H1 (cell line): ENCODE measurements at regions of chr10 and their contacts with region 1.

Region 1: DNA sequence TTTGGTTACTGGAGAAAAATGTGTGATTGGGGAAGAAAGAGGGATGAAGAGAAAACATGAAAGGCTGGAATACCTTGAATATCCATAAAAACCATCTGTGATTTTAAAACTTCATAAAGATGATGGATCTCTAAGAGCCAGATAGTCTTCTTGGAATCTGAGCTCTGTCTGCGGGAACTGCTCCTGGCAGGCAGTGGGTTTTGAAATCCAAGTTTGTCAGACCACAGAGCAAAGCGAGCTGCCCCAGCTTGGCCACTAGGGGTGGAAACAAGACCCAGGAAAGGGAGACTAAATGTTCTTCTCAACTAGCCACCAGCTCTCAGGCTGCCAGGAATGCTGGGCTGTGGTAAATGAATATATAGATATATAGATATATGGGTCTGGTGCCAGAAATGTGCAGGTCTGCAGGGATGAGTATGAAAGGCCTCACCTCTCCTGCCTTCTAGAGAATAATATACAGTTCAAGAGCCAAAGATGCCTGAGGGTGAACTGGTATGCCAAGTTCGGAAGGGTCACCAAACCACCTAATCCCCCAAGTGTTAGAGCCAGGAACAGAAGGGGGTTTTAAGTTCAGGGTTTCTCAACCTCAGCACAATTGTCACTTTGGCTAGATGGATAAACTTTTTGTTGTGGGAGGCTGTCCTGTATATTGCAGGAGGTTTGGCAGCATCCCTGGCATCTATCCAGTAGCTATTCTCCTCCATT is 208.8 kb downstream of the KCNMA1 start:
- DNase-seq: peak in 1 of 2 experiments; percentile 60
- H3K4me3 ChIP-seq: no peak overlapping the region
- H3K27ac ChIP-seq: no peak overlapping the region
- H3K4me1 ChIP-seq: peaks cover 0 to 15% (median 5%) of the 10 kb centered on the region in 4 experiments; a peak in 3 of 7 replicates
- H3K27me3 ChIP-seq: no peaks in the 10 kb centered on the region; a peak in 1 of 7 replicates
- CTCF ChIP-seq: peak; percentile 65 to 84 (median 76)
- EP300 ChIP-seq: no peak
- POLR2A ChIP-seq: no peak
- RAD21 ChIP-seq: peak; percentile 47 to 71

Region 2: DNA sequence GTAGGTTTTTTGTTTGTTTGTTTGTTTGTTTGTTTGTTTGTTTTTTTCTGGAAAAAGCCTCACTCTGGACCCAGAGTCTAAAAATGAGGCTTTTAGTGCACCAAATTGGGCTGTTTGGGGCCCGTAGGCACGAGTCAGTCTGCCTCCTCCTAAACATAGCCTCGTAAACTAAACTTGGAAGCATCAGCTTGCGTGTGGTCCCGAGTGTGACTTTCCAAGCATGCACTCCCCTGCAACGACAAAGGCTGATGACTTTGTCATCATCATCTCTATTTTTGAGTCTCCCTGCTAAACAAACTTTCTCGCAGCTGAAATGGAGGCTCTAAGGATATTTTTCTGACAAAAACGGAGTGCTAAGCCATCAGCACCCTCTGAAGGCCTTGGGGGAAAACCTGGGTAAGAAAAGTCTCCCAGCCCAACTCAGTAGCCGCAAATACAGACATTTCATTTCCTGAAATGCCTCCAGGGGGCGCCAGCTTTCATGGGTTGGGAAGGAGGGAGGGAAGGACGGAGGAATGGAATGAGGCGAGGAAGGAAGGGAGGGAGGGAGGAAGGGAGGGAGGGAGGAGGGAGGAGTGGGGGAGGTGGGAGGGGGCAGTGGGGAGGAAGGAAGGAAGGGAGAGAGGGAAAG is 37.1 kb before region 1 on chr10:
- CTCF ChIA-PET with region 1: interaction called, 11 read pairs
- POLR2A ChIA-PET with region 1: interaction called, 4 read pairs
- DNase-seq: peak; percentile 62 to 97
- H3K4me3 ChIP-seq: no peak overlapping the region
- H3K27ac ChIP-seq: no peak overlapping the region
- H3K4me1 ChIP-seq: peaks cover 0 to 8% (median 5%) of the 10 kb centered on the region in 4 experiments; a peak in 4 of 7 replicates
- H3K27me3 ChIP-seq: no peaks in the 10 kb centered on the region
- CTCF ChIP-seq: peak; percentile 68 to 82 (median 70)
- EP300 ChIP-seq: no peak
- POLR2A ChIP-seq: no peak
- RAD21 ChIP-seq: peak; percentile 71 to 83

Region 3: DNA sequence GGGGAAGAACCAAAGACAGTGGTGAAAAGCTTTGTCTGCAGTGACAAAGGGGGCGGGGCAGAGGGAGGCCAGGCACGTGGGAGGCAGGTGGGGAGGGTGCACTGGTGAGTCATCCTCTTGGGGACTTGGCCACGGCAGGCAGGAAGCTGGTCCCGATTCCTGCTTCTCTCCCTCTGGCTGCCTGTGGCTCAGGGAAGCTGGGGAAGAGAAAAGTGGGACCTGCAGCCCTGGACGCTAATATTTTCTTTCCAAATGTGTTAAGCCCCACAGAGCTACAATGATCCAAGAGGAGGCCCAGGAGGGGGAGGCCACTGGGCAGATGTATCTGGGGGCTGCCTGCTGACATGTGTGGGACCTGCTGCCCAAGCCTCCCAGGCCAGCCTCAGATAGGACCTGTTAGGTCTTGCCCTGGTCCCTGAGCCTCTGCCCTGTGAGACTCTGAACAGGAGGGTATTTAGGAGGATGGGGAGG is 23.0 kb before region 1 on chr10:
- CTCF ChIA-PET with region 1: interaction called, 41 read pairs
- POLR2A ChIA-PET with region 1: interaction called, 3 read pairs
- DNase-seq: peak; percentile 59 to 77
- H3K4me3 ChIP-seq: no peak overlapping the region
- H3K27ac ChIP-seq: no peak overlapping the region
- H3K4me1 ChIP-seq: peaks cover 2 to 5% (median 4%) of the 10 kb centered on the region in 4 experiments; a peak in 4 of 7 replicates
- H3K27me3 ChIP-seq: no peaks in the 10 kb centered on the region
- CTCF ChIP-seq: no peak
- EP300 ChIP-seq: no peak
- POLR2A ChIP-seq: no peak
- RAD21 ChIP-seq: no peak

Region 4: DNA sequence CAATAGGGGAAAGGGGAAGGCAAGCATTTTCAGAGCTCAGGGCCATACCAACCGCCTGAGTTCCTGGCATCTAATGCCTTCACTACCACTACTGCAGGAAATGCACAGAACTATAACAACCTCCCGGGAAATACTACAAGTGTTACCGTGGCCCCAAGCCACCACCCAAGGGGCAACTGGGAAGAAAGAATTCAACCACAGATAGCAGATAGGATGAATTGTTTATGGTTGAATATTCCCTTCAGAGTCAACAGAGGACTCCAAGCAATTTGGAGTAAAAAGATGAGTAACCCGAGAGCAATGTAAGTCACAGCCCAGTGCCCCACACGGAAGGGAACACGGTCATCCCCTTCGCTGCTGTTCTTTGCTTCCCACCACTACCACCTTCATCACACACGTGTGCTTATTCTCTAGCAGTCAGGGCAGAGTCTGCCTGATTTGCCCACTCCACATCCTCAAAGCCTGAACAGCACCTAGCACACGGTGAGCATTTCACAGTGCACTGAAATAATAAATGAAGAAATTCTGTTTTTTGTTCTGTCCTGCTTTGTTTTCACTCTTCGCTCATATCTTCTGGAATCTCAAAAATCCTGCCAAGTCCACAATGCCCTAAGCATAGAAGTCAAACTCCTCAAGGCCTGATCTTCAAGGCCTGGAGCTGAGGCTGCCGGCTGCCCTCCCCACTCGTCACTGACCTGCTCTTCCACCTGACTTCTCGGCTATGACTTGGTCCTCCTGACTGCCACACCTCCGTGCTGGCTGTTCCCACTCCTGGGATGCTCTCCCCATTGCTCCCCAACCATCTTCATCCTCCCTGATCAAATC is 12.3 kb before region 1 on chr10:
- CTCF ChIA-PET with region 1: interaction called, 41 read pairs
- POLR2A ChIA-PET with region 1: interaction called, 3 read pairs
- DNase-seq: no peak
- H3K4me3 ChIP-seq: no peak overlapping the region
- H3K27ac ChIP-seq: no peak overlapping the region
- H3K4me1 ChIP-seq: no peaks in the 10 kb centered on the region
- H3K27me3 ChIP-seq: no peaks in the 10 kb centered on the region
- CTCF ChIP-seq: no peak
- EP300 ChIP-seq: no peak
- POLR2A ChIP-seq: no peak
- RAD21 ChIP-seq: no peak

Region 5: DNA sequence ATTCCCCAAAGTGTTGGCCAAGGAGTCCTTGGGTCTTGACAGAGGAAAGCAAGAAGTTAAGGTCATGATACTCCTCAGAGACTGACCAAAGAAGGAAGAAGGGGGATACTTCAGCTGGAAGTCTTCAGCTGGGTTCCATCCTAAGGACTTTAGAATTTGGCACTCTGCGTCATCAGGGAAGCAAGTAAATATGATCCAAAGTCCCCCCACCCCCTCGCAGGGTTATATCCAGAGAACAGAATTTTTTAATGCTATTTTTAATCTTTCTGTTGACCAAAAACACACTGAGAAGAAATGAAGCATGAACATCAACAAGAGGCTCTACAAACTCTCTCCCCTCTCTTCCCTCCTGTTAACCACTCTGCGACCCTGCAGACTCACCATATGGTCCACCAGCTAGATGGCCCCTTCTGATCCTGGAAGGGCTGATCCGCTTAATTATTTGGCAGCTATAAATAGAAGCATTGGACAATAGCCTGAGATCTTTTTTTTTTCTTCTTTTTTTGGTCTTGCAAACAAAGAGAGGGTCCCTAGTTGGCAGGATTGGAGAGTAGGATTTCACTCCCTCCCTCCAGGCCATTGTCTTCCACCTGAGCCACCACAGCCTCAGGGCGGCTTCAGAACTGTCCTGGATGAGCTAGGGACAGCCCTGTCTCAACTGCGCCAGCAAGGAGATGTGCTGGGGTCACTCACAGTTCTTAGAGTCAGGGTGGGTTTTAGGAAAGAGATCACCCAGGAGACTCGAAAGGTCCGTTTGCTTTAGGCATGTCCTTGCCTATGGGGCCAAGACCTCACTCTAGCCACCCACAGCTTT is 12.7 kb after region 1 on chr10:
- CTCF ChIA-PET with region 1: interaction called, 21 read pairs
- POLR2A ChIA-PET with region 1: interaction called, 4 read pairs
- DNase-seq: no peak
- H3K4me3 ChIP-seq: no peak overlapping the region
- H3K27ac ChIP-seq: no peak overlapping the region
- H3K4me1 ChIP-seq: peaks cover 0 to 3% (median 0%) of the 10 kb centered on the region in 4 experiments; a peak in 1 of 7 replicates
- H3K27me3 ChIP-seq: no peaks in the 10 kb centered on the region
- CTCF ChIP-seq: no peak
- EP300 ChIP-seq: no peak
- POLR2A ChIP-seq: no peak
- RAD21 ChIP-seq: no peak

Region 6: DNA sequence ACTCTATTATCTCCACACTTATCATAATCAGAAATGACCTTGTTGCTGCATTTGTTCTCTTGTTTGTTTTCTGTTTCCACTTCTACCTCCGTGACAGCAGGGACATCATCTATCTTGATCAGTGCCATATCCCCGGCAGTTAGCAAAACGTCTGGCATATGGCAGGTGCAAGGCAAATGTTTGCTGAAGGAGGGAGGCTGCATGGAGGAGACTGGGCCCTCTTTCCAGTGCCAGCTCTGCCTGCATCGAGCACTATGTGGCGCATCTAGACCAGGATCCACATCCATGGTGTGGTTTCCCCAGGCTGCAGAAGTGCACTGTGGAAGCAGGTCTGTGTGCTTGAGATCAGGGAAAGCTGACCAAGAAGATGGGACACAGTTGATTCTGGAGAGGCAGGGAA is 27.6 kb after region 1 on chr10:
- CTCF ChIA-PET with region 1: interaction called, 12 read pairs
- POLR2A ChIA-PET with region 1: no interaction called
- DNase-seq: no peak
- H3K4me3 ChIP-seq: no peak overlapping the region
- H3K27ac ChIP-seq: no peak overlapping the region
- H3K4me1 ChIP-seq: peaks cover 0 to 5% (median 2%) of the 10 kb centered on the region in 4 experiments; a peak in 3 of 7 replicates
- H3K27me3 ChIP-seq: peaks cover 0 to 1% (median 0%) of the 10 kb centered on the region in 4 experiments; a peak in 1 of 7 replicates
- CTCF ChIP-seq: no peak
- EP300 ChIP-seq: no peak
- POLR2A ChIP-seq: no peak
- RAD21 ChIP-seq: no peak